ENCODE measurements at regions of chr7 and their contacts with region 1.

Region 1: DNA sequence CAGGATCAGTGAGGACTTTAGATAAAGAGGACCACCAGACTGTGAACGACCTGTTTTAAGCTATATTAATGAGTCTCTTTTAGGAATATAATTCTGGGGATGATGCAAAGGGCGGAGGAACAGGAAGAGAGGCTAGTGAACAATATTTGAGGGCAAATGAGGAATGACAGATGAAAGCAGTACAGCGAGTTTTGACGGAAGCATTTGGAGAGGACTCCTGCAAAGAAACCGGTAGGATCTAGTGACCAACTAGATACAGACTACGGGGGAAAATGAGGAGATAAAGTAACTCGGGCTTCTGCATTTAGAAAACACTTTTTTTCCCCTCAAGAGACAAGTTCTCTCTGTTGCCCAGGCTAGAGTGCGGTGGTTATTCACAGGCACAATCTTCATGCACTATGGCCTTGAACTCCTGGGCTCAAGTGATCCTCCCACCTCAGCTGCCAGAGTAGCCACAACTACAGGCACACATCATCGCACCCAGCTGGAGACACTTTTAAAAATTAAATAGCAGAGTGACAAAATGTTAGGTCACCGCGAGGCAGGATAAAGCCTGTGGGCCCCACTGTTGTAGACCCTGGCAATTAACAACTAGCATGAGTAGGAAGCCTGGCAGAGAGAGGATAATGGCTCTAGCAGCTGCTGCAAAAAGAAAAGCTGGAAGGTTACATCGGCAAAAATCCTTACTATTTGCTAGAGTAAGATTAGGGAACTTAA is 143.2 kb downstream of the SRPK2 start:
- DNase-seq: no peak

Region 2: GRCh38 chr7:104993217-104993862 is 252.2 kb before region 1 on chr7:
- intact Hi-C with region 1: no loop called
- DNase-seq: no peak

Region 3: DNA sequence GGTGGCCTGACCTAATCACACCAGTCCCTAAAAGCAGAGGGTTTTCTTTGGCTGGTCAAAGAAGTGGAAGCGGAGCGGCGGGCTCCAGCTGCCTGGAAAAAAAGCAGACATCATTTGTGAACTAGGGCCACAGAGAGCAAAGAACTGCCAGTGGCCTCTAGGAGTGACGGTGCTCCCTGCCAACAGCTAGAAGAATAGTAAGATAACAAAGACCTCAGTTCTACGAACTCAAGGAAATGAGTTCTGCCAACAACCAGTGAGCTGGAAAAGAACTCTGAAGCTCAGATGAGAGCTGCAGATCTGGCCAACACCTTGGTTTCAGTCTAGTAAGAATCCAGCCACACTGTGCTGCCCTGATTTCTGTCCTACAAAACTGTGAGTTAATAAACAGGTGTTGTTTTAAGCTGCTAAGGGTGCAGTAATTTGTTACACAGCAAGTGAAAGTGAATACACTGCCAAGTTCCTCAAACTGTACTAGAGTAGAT is 34.8 kb before region 1 on chr7:
- intact Hi-C with region 1: loop called in 1 of 2 experiments (anchors 1 kb)
- DNase-seq: no peak